Endothelial cell of umbilical vein (primary cell): ENCODE measurements at regions of chr6 and their contacts with region 1.

Region 1: GRCh38 chr6:87534377-87535047 is 55.3 kb downstream of the RARS2 start:
- DNase-seq: no peak
- H3K4me3 ChIP-seq: no peak overlapping the region
- H3K27ac ChIP-seq: no peak overlapping the region
- H3K4me1 ChIP-seq: no peaks in the 10 kb centered on the region
- H3K27me3 ChIP-seq: no peaks in the 10 kb centered on the region
- CTCF ChIP-seq: no peak
- POLR2A ChIP-seq: no peak

Region 2: DNA sequence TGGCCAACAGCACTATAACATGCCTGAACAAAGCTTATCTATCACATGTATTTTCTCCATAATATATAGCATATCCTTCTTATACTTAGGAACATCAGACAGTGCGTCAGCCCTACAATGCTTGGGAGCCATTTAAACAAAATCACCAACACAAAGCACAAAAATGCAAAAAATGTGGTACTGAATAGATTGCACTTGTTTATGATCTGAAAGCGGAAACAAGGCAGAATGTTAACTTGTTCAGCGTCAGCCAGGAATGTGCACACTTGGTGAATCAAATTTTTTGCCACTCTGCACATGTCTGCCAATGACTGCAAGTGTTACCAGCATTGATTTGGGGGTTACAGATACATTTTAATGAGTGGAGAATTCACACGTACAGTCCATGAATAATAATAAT is 47.0 kb before region 1 on chr6:
- CTCF ChIA-PET with region 1: no interaction called
- POLR2A ChIA-PET with region 1: no interaction called
- dilution Hi-C with region 1: no loop called
- intact Hi-C with region 1: loop called (anchors 5 kb)
- DNase-seq: peak; percentile 77
- H3K4me3 ChIP-seq: no peak overlapping the region
- H3K27ac ChIP-seq: peak overlapping the region; percentile 74
- H3K4me1 ChIP-seq: peaks cover 14% of the 10 kb centered on the region
- H3K27me3 ChIP-seq: no peaks in the 10 kb centered on the region
- CTCF ChIP-seq: no peak
- POLR2A ChIP-seq: no peak

Region 3: GRCh38 chr6:87558446-87558845 is 23.9 kb after region 1 on chr6:
- CTCF ChIA-PET with region 1: no interaction called
- POLR2A ChIA-PET with region 1: no interaction called
- dilution Hi-C with region 1: no loop called
- intact Hi-C with region 1: no loop called
- DNase-seq: no peak
- H3K4me3 ChIP-seq: no peak overlapping the region
- H3K27ac ChIP-seq: no peak overlapping the region
- H3K4me1 ChIP-seq: no peaks in the 10 kb centered on the region
- H3K27me3 ChIP-seq: no peaks in the 10 kb centered on the region
- CTCF ChIP-seq: no peak
- POLR2A ChIP-seq: no peak

Region 4: DNA sequence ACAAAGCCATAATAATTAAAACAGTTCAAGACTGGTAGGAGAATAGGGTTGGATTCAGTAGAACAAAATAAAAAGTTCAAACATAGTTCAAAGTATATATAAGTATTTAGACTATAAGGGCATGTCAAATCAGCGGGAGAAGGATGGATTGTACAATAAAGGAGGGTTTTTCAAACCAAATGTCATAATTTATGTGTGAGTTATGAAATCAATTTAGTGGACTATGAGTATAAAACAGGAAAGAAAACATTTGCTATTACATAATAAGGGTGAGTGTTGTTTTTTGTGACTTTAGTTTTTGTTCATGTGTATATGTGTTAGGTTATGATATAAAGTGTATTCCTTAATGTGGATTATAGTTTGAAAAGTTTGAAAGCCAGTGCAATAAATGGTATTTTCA is 66.1 kb after region 1 on chr6:
- CTCF ChIA-PET with region 1: no interaction called
- POLR2A ChIA-PET with region 1: no interaction called
- dilution Hi-C with region 1: no loop called
- intact Hi-C with region 1: no loop called
- DNase-seq: no peak
- H3K4me3 ChIP-seq: no peak overlapping the region
- H3K27ac ChIP-seq: no peak overlapping the region
- H3K4me1 ChIP-seq: no peaks in the 10 kb centered on the region
- H3K27me3 ChIP-seq: no peaks in the 10 kb centered on the region
- CTCF ChIP-seq: no peak
- POLR2A ChIP-seq: no peak

Region 5: DNA sequence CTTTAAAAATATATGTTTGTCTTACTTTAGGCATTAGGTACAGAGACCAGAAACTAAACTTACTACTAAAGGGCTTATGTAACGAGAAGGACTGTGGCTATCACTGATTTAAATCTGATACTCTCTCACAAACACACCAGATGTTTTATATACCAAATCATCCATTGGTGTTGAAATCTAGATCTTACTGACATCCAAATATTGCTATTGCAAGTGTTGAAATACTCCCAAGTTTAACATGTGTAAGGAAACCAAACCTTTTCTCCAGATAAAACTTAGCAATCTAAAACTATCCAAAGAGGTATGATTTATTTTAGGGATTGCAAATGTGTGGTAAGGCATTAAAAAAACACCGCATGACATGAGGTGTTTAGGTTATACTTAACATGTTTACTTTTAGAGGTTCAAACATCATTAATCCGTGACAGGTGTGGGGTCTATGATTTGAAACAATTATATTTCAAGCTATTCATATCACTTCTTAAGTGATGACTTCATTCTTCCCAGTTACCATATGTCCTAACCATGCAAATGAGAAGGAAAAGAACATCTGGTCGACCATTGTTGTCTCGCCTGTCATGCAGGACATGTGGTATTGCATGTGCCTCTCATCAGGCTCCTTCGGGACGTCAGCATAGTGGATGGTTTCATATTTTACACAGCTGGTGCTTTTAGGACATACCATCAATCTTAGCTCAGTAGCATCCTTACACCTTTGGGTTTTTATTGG is 344.8 kb after region 1 on chr6:
- CTCF ChIA-PET with region 1: no interaction called
- POLR2A ChIA-PET with region 1: no interaction called
- dilution Hi-C with region 1: no loop called
- intact Hi-C with region 1: no loop called
- DNase-seq: no peak
- H3K4me3 ChIP-seq: no peak overlapping the region
- H3K27ac ChIP-seq: no peak overlapping the region
- H3K4me1 ChIP-seq: no peaks in the 10 kb centered on the region
- H3K27me3 ChIP-seq: peaks cover 0 to 5% of the 10 kb centered on the region in 2 experiments
- CTCF ChIP-seq: no peak
- POLR2A ChIP-seq: no peak